ENCODE measurements at regions of chr22 and their contacts with region 1.

Region 1: GRCh38 chr22:37608477-37609239 is at the start of gene GGA1:
- DNase-seq: peak; percentile 98
- H3K4me3 Mint-ChIP-seq: peak within 1 kb of the TSS; percentile 86
- H3K27ac Mint-ChIP-seq: peak within 1 kb of the TSS; percentile 98
- H3K4me1 Mint-ChIP-seq: peaks cover 50% of the 10 kb centered on the region
- H3K27me3 Mint-ChIP-seq: no peaks in the 10 kb centered on the region
- total RNA-seq, gene GGA1: 46.1 to 49.1 TPM

Region 2: DNA sequence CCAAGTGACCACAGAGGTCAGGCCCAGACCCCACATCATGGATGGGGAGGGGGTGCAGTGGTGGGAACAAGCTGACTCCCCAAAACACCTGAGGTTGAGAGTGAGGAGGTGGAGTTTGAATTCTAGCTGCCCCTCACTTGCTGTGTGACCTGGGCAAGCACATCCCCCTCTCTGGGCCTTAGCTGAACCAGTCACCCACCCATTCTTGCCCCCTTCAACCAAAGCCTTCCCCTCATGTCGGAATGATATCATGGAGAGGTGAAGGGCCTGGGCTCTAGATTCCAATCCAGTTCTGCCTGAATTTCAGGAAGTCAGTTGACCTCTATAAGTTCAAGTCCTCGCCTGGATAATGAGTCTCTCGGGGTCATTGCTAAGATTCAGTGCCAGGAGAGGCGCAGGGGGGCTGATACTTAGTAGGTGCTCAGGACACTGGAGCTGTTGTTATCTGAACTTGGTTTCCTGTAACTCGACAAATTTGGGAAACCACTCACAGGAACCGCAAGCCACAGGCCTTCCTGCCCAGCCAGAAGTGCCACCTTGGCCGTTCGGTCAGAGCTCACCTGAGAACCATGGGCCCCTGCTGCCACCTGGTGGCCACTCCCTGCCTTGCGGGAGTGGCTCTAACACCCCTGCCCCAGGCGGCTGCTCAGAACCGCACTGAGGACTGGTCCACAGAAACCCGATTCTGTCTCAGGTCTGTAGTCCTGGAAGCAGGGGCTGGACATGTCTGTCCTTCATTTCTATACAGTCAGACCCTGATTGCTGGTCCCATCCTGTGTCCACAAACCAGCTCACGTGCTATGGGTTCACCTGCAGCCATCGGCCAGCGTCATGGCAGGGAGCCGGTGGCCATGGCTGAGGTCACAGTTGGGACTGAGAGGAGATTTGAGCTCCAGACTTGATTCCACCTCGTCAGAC is 41.5 kb before region 1 on chr22:
- CTCF ChIA-PET with region 1: interaction called, 23 read pairs
- intact Hi-C with region 1: no loop called
- DNase-seq: peak; percentile 97
- H3K4me3 Mint-ChIP-seq: peak overlapping the region; percentile 36
- H3K27ac Mint-ChIP-seq: peak overlapping the region; percentile 68
- H3K4me1 Mint-ChIP-seq: peaks cover 22% of the 10 kb centered on the region
- H3K27me3 Mint-ChIP-seq: peaks cover 11% of the 10 kb centered on the region

Region 3: GRCh38 chr22:37594237-37594636 is 14.4 kb before region 1 on chr22:
- CTCF ChIA-PET with region 1: interaction called, 42 read pairs
- intact Hi-C with region 1: loop called (anchors 1 kb)
- DNase-seq: no peak
- H3K4me3 Mint-ChIP-seq: no peak overlapping the region
- H3K27ac Mint-ChIP-seq: no peak overlapping the region
- H3K4me1 Mint-ChIP-seq: peaks cover 13% of the 10 kb centered on the region
- H3K27me3 Mint-ChIP-seq: no peaks in the 10 kb centered on the region

Region 4: GRCh38 chr22:37643225-37643847 is 34.7 kb after region 1 on chr22:
- CTCF ChIA-PET with region 1: interaction called, 21 read pairs
- intact Hi-C with region 1: no loop called
- DNase-seq: peak; percentile 93
- H3K4me3 Mint-ChIP-seq: no peak overlapping the region
- H3K27ac Mint-ChIP-seq: peak overlapping the region; percentile 47
- H3K4me1 Mint-ChIP-seq: peaks cover 34% of the 10 kb centered on the region
- H3K27me3 Mint-ChIP-seq: no peaks in the 10 kb centered on the region

Region 5: GRCh38 chr22:37686002-37686982 is 77.6 kb after region 1 on chr22 and contains the start of gene NOL12:
- CTCF ChIA-PET with region 1: interaction called, 14 read pairs
- intact Hi-C with region 1: loop called (anchors 1 kb)
- DNase-seq: peak; percentile 81
- H3K4me3 Mint-ChIP-seq: peak within 1 kb of the TSS; percentile 92
- H3K27ac Mint-ChIP-seq: peak within 1 kb of the TSS; percentile 85
- H3K4me1 Mint-ChIP-seq: peaks cover 32% of the 10 kb centered on the region
- H3K27me3 Mint-ChIP-seq: no peaks in the 10 kb centered on the region
- total RNA-seq, gene NOL12: 26.7 to 30.4 TPM

Region 6: DNA sequence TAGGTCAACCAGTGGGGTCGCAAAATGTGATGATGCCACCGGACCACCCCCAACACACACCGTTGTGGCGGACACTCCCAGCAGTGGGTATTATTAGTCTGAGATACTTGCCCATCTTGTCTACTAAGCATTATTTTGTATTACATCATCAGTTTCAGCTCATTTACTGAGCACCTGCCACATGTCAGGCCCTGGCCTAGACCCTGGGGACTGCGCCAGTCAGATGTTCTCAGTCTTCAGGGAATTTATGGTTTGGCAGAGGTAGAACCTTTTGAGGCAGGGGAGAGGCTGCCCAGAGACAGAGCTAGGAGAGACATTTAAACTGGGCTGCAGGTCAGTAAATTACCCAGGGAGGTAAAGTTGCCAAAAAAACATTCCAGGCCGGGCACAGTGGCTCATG is 156.0 kb after region 1 on chr22:
- CTCF ChIA-PET with region 1: no interaction called
- intact Hi-C with region 1: no loop called
- DNase-seq: no peak
- H3K4me3 Mint-ChIP-seq: no peak overlapping the region
- H3K27ac Mint-ChIP-seq: no peak overlapping the region
- H3K4me1 Mint-ChIP-seq: no peaks in the 10 kb centered on the region
- H3K27me3 Mint-ChIP-seq: no peaks in the 10 kb centered on the region

Measured in activated naive CD4-positive, alpha-beta T cell treated with anti-CD3 and anti-CD28 coated beads for 36 hours (primary cell).